AG04449 (cell line): ENCODE measurements at regions of chr9 and their contacts with region 1.

Region 1: GRCh38 chr9:137029058-137029936 is 1.3 kb upstream of the ABCA2 start:
- DNase-seq: no peak
- H3K4me3 ChIP-seq: no peak overlapping the region; the same call in 1 of the 2 replicates
- CTCF ChIP-seq: peak; percentile 97

Region 2: GRCh38 chr9:136564379-136564988 is 464.8 kb before region 1 on chr9:
- CTCF ChIA-PET with region 1: no interaction called
- POLR2A ChIA-PET with region 1: no interaction called
- DNase-seq: no peak
- H3K4me3 ChIP-seq: no peak overlapping the region
- CTCF ChIP-seq: no peak

Region 3: GRCh38 chr9:136790927-136791641 is 238.2 kb before region 1 on chr9 and contains the start of gene TMEM141:
- CTCF ChIA-PET with region 1: interaction called, 101 read pairs
- POLR2A ChIA-PET with region 1: no interaction called
- DNase-seq: peak; percentile 93
- H3K4me3 ChIP-seq: peak within 1 kb of the TSS; percentile 94
- CTCF ChIP-seq: no peak

Region 4: GRCh38 chr9:136944519-136945279 is 84.6 kb before region 1 on chr9 and contains the starts of genes C8G and FBXW5:
- CTCF ChIA-PET with region 1: interaction called, 148 read pairs
- POLR2A ChIA-PET with region 1: interaction called, 13 read pairs
- DNase-seq: peak; percentile 14
- H3K4me3 ChIP-seq: peak within 1 kb of the TSS; percentile 81
- CTCF ChIP-seq: peak; percentile 96

Region 5: DNA sequence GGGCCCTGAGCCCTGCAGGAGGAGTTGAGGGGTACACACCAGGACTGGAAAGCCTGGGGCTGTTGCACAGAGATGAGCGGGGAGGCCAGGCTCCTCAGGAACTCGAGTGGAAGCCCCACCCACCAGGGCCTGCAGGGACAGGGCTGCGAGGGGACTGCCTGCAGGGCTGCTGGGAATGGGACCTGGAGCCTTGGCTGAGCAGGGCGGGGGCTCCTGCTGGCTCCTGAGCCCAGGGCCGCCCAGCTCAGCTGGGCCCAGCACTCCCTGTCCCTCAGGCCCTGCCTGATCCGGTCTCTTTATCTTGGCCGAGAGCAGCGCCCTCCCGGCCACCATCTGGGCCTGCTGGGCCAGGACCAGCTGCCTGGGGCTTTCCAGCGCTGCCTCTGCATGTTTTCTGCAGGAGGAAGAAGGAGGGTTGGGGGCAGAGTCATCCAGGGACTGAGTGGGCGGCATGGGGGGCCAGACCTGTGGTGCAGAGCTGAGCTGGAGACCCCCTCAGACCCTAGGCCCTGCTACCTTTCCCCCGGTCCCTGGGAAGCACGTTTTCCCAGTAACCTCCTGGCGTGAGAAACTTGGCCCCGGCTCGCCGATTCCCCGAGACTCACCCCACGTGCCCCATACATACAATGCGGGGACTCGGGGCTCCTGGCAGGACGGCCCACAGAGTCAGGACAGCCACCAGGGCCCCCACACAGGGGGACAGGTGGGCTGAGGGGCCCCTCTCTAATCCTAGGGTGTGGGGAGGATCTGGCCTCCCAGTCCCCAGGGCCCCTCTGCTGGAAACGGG is 67.8 kb before region 1 on chr9:
- CTCF ChIA-PET with region 1: interaction called, 16 read pairs
- POLR2A ChIA-PET with region 1: no interaction called
- DNase-seq: no peak
- H3K4me3 ChIP-seq: no peak overlapping the region
- CTCF ChIP-seq: no peak

Region 6: GRCh38 chr9:136991993-136992818 is 37.1 kb before region 1 on chr9 and contains the start of gene PAXX:
- CTCF ChIA-PET with region 1: interaction called, 34 read pairs
- POLR2A ChIA-PET with region 1: interaction called, 3 read pairs
- DNase-seq: no peak
- H3K4me3 ChIP-seq: peak within 1 kb of the TSS; percentile 72
- CTCF ChIP-seq: no peak

Region 7: DNA sequence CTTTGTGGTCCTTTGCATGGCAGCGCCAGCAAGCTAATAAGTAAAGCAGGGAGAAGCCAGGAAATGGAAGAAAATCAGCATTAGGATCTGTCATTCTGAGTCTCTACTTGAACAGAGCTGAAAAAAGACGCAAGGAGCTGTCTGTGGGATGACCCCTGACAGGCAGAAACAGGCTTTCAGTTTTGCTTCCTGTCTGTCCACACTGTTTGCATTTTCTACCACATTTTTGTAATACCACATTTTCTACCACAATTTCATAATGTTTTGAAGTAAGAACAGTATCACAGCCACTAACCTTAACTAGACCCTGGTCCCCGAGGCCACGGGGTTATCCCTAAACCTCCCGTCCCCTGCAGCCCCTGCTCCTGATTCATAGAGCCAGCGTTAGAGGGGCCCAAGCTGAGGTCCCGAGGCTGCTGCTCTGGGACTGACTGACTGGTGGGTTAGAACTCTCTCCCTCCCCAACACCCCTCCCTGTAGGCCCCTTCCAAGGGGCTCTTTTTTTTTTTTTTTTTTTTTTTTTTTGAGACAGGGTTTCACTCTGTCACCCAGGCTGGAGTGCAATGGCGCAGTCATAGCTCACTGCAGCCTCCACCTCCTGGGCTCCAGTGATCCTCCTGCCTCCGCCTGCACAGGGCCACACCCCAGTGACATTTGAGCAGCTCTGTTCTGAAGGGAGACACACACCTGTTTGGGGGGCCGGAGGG is 29.0 kb before region 1 on chr9:
- CTCF ChIA-PET with region 1: interaction called, 25 read pairs
- POLR2A ChIA-PET with region 1: interaction called, 3 read pairs
- DNase-seq: peak; percentile 42
- H3K4me3 ChIP-seq: no peak overlapping the region
- CTCF ChIP-seq: no peak